ENCODE measurements at regions of chr12 and their contacts with region 1.

Region 1: GRCh38 chr12:120820885-120821510 is 83.2 kb downstream of the SPPL3 start:
- DNase-seq: no peak
- ATAC-seq: no peak
- H3K4me3 ChIP-seq: no peak overlapping the region
- H3K4me3 Mint-ChIP-seq: no peak overlapping the region
- H3K27ac ChIP-seq: no peak overlapping the region
- H3K27ac Mint-ChIP-seq: no peak overlapping the region
- H3K4me1 ChIP-seq: no peaks in the 10 kb centered on the region
- H3K4me1 Mint-ChIP-seq: peaks cover 35% of the 10 kb centered on the region
- H3K27me3 ChIP-seq: no peaks in the 10 kb centered on the region
- H3K27me3 Mint-ChIP-seq: no peaks in the 10 kb centered on the region
- CTCF ChIP-seq: no peak

Region 2: GRCh38 chr12:120797677-120798642 is 23.0 kb before region 1 on chr12:
- CTCF ChIA-PET with region 1: no interaction called
- POLR2A ChIA-PET with region 1: no interaction called
- intact Hi-C with region 1: loop called (anchors 2 kb)
- DNase-seq: peak; percentile 26
- ATAC-seq: peak; percentile 24
- H3K4me3 ChIP-seq: peak overlapping the region in 1 of 5 experiments; percentile 34
- H3K4me3 Mint-ChIP-seq: no peak overlapping the region
- H3K27ac ChIP-seq: peak overlapping the region in 1 of 2 donors; percentile 27
- H3K27ac Mint-ChIP-seq: peak overlapping the region; percentile 23
- H3K4me1 ChIP-seq: peaks cover 29 to 30% of the 10 kb centered on the region in 2 donors
- H3K4me1 Mint-ChIP-seq: peaks cover 49% of the 10 kb centered on the region
- H3K27me3 ChIP-seq: no peaks in the 10 kb centered on the region
- H3K27me3 Mint-ChIP-seq: no peaks in the 10 kb centered on the region
- CTCF ChIP-seq: no peak